ENCODE measurements at regions of chrX and their contacts with region 1.

Region 1: DNA sequence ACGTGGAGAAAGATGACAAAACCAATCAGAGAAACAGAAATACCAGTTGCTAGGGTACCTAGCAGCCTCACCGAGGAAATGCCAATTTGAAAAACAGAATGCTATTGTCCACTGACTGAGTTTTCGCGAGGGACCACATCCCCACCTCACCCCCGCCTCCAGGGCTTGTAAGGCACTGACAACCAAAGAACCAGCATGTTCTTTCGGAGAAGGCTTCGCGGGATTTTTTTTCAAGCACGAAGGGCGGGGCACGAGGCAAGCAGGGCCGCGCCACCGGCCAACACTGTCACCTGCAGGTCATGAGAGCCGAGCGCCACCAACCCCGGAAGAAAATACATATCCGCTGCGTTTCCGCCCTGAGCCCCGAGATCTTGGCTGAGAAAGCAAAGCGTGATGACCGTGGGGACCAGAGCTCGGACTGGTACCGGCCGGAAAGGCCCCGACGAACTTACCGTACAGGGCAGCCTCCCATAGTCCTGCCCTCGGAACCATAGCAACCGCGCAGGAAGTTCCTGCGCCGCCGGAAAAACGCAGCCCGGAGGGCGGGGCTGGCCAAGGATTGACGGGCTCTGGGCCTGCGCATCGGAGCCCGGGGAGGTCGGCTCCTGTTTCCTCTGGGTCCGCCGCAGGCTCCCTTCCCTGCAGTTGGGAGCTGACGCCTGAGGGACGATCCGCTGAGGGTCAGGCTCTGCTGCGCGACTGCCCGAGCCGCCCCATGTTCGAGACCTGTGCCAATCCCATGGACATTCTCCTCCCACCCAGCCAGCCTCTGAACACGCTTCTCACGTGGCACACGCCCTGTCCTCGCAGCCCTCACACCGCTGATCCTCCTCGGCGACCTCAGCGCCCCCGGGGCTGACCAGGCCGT is 59.2 kb upstream of the PAGE5 start:
- DNase-seq: peak; percentile 81
- ATAC-seq: peak; percentile 93
- H3K4me3 Mint-ChIP-seq: peak overlapping the region; percentile 89
- H3K27ac Mint-ChIP-seq: peak overlapping the region; percentile 94
- H3K4me1 Mint-ChIP-seq: peaks cover 11% of the 10 kb centered on the region
- H3K27me3 Mint-ChIP-seq: no peaks in the 10 kb centered on the region
- CTCF ChIP-seq: no peak

Region 2: DNA sequence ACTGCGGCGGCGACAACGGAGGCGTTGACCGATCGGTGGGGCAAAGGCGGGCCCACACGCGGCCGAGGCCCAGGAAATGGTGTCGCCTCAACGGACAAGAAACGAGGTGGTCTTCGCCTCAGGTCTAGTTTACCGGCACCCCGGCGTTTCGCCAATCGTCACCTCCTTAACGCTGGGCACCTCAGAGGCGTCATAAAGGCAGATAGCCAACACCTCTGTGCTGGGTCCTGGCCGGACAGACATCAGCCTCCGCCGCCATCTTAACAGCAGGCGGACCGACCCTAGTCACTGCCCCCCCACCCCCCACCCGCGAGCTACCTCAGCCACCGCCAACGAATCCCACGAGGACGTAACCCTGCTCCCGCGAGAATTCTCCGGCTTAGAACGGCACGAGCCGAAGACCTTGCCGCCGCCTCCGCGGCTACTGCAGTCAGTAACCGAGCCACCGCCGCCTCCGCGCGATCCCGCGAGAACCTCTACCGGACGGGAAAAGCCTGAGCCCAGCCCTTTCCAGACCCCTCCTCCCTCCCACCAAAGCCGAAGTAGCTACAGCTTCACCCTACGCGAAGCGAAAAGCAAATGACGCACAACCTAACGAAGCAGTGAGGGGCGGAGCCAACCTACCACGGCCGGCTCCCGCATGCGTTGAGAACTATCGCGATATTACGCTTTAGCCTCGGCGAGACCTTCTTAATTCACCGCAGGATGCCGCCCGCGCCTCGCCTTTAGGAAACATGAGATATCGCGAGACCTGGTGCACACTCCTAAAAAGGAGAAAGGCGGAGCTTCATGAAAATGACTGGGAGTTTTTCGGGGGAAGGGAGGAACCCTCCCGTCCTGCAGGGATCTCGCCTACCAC is 1477.1 kb before region 1 on chrX:
- CTCF ChIA-PET with region 1: no interaction called
- POLR2A ChIA-PET with region 1: interaction called, 6 read pairs
- intact Hi-C with region 1: loop called (anchors 10 kb)
- DNase-seq: peak; percentile 69
- ATAC-seq: peak; percentile 68
- H3K4me3 Mint-ChIP-seq: peak overlapping the region; percentile 91
- H3K27ac Mint-ChIP-seq: peak overlapping the region; percentile 97
- H3K4me1 Mint-ChIP-seq: peaks cover 40% of the 10 kb centered on the region
- H3K27me3 Mint-ChIP-seq: no peaks in the 10 kb centered on the region
- CTCF ChIP-seq: no peak

Region 3: DNA sequence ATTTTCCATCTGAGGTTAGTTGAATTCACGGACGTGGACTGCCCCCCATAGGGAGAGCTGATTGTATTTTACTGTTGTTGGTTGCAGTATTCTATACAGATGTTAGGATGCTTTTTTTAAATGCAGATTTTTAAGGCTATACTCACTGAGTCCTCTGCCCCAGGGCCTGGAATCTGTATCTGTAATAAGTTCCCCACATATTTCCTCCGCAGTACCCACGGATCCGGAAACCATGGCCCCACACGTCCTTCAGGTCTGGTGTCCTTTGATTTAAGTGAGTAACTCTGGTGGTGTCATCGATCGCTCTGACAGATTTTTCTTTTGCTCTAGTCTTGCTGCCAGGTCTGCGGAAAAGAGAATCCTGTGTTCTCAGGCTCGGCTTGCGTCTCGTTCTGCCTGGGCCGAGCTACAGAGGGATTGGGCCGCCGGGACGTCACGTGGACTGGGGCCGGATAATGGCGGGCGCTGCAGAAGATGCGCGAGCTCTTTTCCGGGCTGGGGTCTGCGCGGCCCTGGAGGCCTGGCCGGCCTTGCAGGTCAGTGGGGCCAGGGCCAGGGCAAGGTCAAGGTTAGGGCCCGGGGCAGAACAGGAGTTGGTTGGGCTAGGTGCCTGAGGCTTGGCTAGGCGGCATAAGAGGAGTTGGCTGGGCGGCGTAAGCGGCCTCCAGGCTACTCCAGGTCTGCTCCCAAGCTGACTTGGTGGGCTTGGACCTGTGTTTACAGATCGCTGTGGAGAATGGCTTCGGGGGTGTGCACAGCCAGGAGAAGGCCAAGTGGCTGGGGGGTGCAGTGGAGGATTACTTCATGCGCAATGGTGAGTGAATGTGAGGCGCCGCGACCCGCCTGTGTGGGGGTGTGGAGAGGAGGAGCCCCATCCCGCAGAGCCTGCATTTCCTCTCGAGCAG is 720.7 kb before region 1 on chrX and contains the start of gene TSR2:
- CTCF ChIA-PET with region 1: no interaction called
- POLR2A ChIA-PET with region 1: no interaction called
- intact Hi-C with region 1: loop called (anchors 5 kb)
- DNase-seq: peak; percentile 59
- ATAC-seq: peak; percentile 98
- H3K4me3 Mint-ChIP-seq: peak within 1 kb of the TSS; percentile 91
- H3K27ac Mint-ChIP-seq: peak within 1 kb of the TSS; percentile 76
- H3K4me1 Mint-ChIP-seq: peaks cover 29% of the 10 kb centered on the region
- H3K27me3 Mint-ChIP-seq: no peaks in the 10 kb centered on the region
- CTCF ChIP-seq: no peak
- total RNA-seq, gene TSR2: 35.9 and 42.4 TPM in 2 replicates

Region 4: DNA sequence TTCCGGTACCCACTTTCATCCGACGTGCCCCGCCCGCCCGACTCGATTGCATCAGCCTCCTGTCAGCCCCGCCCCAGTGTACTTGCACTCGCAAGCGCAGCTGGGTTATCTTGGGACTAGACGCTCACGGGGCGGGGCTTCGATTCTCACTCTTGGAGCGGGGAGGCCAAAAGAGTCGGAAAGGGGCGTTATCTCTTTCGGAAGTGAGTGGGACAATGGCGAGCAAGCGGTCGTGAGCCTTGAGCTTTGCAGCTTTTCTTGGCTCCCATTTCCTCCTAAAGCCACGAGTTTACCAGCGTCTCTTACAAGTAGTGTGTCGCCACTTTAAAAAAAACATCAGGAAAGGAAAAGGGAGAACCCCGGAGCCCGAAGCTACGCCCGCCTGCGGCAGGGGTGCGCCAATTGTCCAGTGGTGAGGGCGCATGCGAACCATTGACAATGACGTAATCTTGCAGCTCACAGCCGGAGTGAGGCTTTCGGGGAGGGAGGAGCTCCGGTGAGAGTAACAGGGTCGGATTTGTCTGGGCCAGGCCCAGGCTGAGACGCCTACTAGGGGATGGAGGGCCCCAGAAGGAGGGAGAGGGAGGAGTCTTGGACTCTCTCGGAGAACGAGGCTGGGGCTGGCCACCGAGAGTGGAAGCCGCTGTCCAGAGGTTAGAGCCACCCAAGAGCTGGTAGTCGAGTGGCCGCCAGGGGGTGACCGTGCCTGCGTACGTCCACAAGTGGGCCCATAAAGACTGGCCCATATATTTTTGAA is 521.4 kb before region 1 on chrX:
- CTCF ChIA-PET with region 1: no interaction called
- POLR2A ChIA-PET with region 1: no interaction called
- intact Hi-C with region 1: loop called (anchors 1 kb)
- DNase-seq: peak; percentile 76
- ATAC-seq: peak; percentile 88
- H3K4me3 Mint-ChIP-seq: peak overlapping the region; percentile 97
- H3K27ac Mint-ChIP-seq: peak overlapping the region; percentile 100
- H3K4me1 Mint-ChIP-seq: peaks cover 6% of the 10 kb centered on the region
- H3K27me3 Mint-ChIP-seq: no peaks in the 10 kb centered on the region
- CTCF ChIP-seq: no peak

Region 5: GRCh38 chrX:54891573-54891972 is 269.3 kb before region 1 on chrX:
- CTCF ChIA-PET with region 1: no interaction called
- POLR2A ChIA-PET with region 1: no interaction called
- intact Hi-C with region 1: loop called (anchors 2 kb)
- DNase-seq: no peak
- ATAC-seq: no peak
- H3K4me3 Mint-ChIP-seq: no peak overlapping the region
- H3K27ac Mint-ChIP-seq: no peak overlapping the region
- H3K4me1 Mint-ChIP-seq: no peaks in the 10 kb centered on the region
- H3K27me3 Mint-ChIP-seq: peaks cover 6% of the 10 kb centered on the region
- CTCF ChIP-seq: no peak

Region 6: GRCh38 chrX:55057675-55058249 is 103.2 kb before region 1 on chrX:
- CTCF ChIA-PET with region 1: no interaction called
- POLR2A ChIA-PET with region 1: no interaction called
- intact Hi-C with region 1: loop called (anchors 5 kb)
- DNase-seq: no peak
- ATAC-seq: peak; percentile 54
- H3K4me3 Mint-ChIP-seq: peak overlapping the region; percentile 68
- H3K27ac Mint-ChIP-seq: no peak overlapping the region
- H3K4me1 Mint-ChIP-seq: peaks cover 11% of the 10 kb centered on the region
- H3K27me3 Mint-ChIP-seq: no peaks in the 10 kb centered on the region
- CTCF ChIP-seq: peak; percentile 18

Region 7: DNA sequence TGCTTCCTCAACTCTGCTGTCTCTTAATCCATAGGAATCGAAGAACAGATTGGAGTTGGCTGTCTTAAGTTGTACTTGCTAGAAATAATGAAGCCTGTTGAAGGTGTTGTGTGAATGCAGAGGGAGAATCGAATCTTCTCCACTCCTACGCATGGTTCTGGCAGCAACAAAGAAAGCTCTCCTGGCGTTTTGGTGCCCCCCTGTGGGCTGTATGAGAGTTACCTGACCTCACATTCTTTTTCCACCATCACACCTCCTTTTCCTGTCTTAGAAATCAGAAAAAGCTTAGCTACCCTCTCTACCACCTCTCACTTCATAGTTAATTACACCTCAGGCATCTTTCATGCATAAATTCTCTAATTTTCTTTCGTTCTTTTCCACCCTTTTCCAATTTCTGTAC is 1087.6 kb after region 1 on chrX:
- CTCF ChIA-PET with region 1: no interaction called
- POLR2A ChIA-PET with region 1: no interaction called
- intact Hi-C with region 1: loop called (anchors 1 kb)
- DNase-seq: peak; percentile 16
- ATAC-seq: peak; percentile 70
- H3K4me3 Mint-ChIP-seq: no peak overlapping the region
- H3K27ac Mint-ChIP-seq: no peak overlapping the region
- H3K4me1 Mint-ChIP-seq: peaks cover 23% of the 10 kb centered on the region
- H3K27me3 Mint-ChIP-seq: no peaks in the 10 kb centered on the region
- CTCF ChIP-seq: no peak